CD8-positive, alpha-beta T cell (primary cell): ENCODE measurements at regions of chr4 and their contacts with region 1.

Region 1: GRCh38 chr4:164081801-164082200 is 587.3 kb downstream of the TMA16 start:
- DNase-seq: no peak
- ATAC-seq: no peak
- H3K4me3 ChIP-seq: no peak overlapping the region
- H3K4me3 Mint-ChIP-seq: no peak overlapping the region
- H3K27ac ChIP-seq: no peak overlapping the region
- H3K27ac Mint-ChIP-seq: no peak overlapping the region
- H3K4me1 ChIP-seq: no peaks in the 10 kb centered on the region
- H3K4me1 Mint-ChIP-seq: no peaks in the 10 kb centered on the region
- H3K27me3 ChIP-seq: no peaks in the 10 kb centered on the region
- H3K27me3 Mint-ChIP-seq: no peaks in the 10 kb centered on the region
- CTCF ChIP-seq: no peak

Region 2: DNA sequence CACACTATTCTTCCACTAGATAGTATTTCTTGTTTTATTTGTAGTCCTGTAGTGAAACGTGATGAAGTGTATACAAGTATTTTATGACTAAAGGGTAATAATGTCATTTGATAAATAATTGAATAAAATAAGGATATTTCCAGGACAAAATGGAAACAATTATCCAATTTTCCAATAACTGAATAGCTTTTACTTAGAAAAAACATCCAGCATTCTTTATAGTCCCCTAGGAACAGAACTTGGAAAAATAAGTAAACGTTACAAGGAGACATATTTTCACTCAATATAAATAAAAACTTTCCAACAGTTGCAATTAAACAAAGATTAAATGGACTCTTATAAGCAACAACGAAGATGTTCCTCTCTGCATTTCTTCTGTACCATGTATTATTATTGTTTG is 21.3 kb before region 1 on chr4:
- CTCF ChIA-PET with region 1: no interaction called
- POLR2A ChIA-PET with region 1: interaction called, 3 read pairs
- intact Hi-C with region 1: loop called in 1 of 2 experiments (anchors 2 kb)
- DNase-seq: no peak
- ATAC-seq: no peak
- H3K4me3 ChIP-seq: no peak overlapping the region
- H3K4me3 Mint-ChIP-seq: no peak overlapping the region
- H3K27ac ChIP-seq: no peak overlapping the region
- H3K27ac Mint-ChIP-seq: no peak overlapping the region
- H3K4me1 ChIP-seq: no peaks in the 10 kb centered on the region
- H3K4me1 Mint-ChIP-seq: no peaks in the 10 kb centered on the region
- H3K27me3 ChIP-seq: no peaks in the 10 kb centered on the region
- H3K27me3 Mint-ChIP-seq: no peaks in the 10 kb centered on the region
- CTCF ChIP-seq: no peak

Region 3: DNA sequence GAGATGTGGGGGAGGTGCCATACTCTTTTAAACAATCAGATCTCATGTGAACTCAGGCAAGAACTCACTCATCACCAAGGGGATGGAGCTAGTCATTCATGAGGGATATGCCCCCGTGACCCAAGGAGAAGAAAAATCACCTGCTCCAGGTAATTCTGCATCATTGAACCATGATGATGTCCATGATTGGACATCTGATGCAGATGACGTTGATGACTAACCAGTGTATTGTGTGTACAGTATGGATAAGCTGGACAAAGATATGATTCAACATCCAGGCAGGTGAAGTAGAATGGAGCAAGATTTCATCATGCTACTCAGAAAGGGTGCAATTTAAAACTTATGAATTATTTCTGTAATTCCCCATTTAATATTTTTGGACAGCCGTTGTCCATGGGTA is 385.7 kb after region 1 on chr4:
- CTCF ChIA-PET with region 1: no interaction called
- POLR2A ChIA-PET with region 1: no interaction called
- intact Hi-C with region 1: no loop called
- DNase-seq: no peak
- ATAC-seq: no peak
- H3K4me3 ChIP-seq: no peak overlapping the region
- H3K4me3 Mint-ChIP-seq: no peak overlapping the region
- H3K27ac ChIP-seq: no peak overlapping the region
- H3K27ac Mint-ChIP-seq: no peak overlapping the region
- H3K4me1 ChIP-seq: no peaks in the 10 kb centered on the region
- H3K4me1 Mint-ChIP-seq: no peaks in the 10 kb centered on the region
- H3K27me3 ChIP-seq: no peaks in the 10 kb centered on the region
- H3K27me3 Mint-ChIP-seq: no peaks in the 10 kb centered on the region
- CTCF ChIP-seq: no peak